WTC11 (cell line): ENCODE measurements at regions of chr4 and their contacts with region 1.

Region 1: GRCh38 chr4:108060164-108060563 is 70.5 kb downstream of the HADH start:
- DNase-seq: no peak
- ATAC-seq: peak; percentile 58
- H3K4me3 Mint-ChIP-seq: no peak overlapping the region
- H3K27ac Mint-ChIP-seq: no peak overlapping the region
- H3K4me1 Mint-ChIP-seq: peaks cover 6% of the 10 kb centered on the region
- H3K27me3 Mint-ChIP-seq: no peaks in the 10 kb centered on the region
- CTCF ChIP-seq: no peak

Region 2: GRCh38 chr4:108018040-108018883 is 41.9 kb before region 1 on chr4:
- CTCF ChIA-PET with region 1: interaction called, 11 read pairs
- POLR2A ChIA-PET with region 1: no interaction called
- DNase-seq: peak; percentile 84
- ATAC-seq: peak; percentile 91
- H3K4me3 Mint-ChIP-seq: no peak overlapping the region
- H3K27ac Mint-ChIP-seq: no peak overlapping the region
- H3K4me1 Mint-ChIP-seq: peaks cover 9% of the 10 kb centered on the region
- H3K27me3 Mint-ChIP-seq: no peaks in the 10 kb centered on the region
- CTCF ChIP-seq: peak; percentile 81

Region 3: DNA sequence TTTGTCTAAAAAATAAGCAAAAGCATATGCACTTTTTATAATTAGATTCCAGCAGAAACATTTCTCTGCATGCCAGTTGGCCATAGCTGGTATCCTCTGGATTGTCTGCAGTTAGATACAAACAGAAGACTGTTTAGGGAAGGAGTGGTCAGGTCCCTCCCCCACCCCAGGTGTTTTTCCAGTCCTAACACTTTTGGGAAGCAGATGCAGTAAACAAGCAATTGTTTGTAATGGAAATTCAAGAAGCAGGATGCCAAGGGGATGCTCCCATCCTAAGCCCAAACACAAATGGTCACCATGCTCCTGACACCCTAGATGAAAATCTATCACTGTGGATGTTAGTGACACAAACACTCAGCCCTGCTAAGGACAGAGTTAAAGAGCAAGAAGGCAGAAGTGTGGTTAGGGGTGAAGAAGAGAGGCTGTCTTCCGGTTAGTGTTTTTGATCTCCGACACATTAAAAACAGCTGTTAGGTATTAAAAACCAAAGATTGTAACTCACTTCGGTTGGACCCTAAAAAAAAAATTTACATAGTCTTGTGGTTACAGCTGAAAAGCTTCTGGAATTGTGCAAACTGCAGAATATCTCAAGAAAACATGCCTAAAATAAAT is 100.7 kb after region 1 on chr4:
- CTCF ChIA-PET with region 1: no interaction called
- POLR2A ChIA-PET with region 1: no interaction called
- DNase-seq: peak; percentile 36
- ATAC-seq: peak; percentile 67
- H3K4me3 Mint-ChIP-seq: no peak overlapping the region
- H3K27ac Mint-ChIP-seq: no peak overlapping the region
- H3K4me1 Mint-ChIP-seq: peaks cover 22% of the 10 kb centered on the region
- H3K27me3 Mint-ChIP-seq: peaks cover 89% of the 10 kb centered on the region
- CTCF ChIP-seq: no peak

Region 4: GRCh38 chr4:108483079-108483478 is 422.9 kb after region 1 on chr4:
- CTCF ChIA-PET with region 1: no interaction called
- POLR2A ChIA-PET with region 1: no interaction called
- DNase-seq: no peak
- ATAC-seq: no peak
- H3K4me3 Mint-ChIP-seq: no peak overlapping the region
- H3K27ac Mint-ChIP-seq: no peak overlapping the region
- H3K4me1 Mint-ChIP-seq: no peaks in the 10 kb centered on the region
- H3K27me3 Mint-ChIP-seq: no peaks in the 10 kb centered on the region
- CTCF ChIP-seq: no peak